ENCODE measurements at regions of chrX and their contacts with region 1.

Region 1: GRCh38 chrX:138745196-138745595 is 33.7 kb upstream of the FGF13 start:
- DNase-seq: no peak
- H3K4me3 ChIP-seq: no peak overlapping the region
- H3K27ac ChIP-seq: no peak overlapping the region
- H3K4me1 ChIP-seq: no peaks in the 10 kb centered on the region
- H3K27me3 ChIP-seq: no peaks in the 10 kb centered on the region
- CTCF ChIP-seq: peak; percentile 31 to 74 (median 57)
- EP300 ChIP-seq: no peak
- POLR2A ChIP-seq: no peak

Region 2: DNA sequence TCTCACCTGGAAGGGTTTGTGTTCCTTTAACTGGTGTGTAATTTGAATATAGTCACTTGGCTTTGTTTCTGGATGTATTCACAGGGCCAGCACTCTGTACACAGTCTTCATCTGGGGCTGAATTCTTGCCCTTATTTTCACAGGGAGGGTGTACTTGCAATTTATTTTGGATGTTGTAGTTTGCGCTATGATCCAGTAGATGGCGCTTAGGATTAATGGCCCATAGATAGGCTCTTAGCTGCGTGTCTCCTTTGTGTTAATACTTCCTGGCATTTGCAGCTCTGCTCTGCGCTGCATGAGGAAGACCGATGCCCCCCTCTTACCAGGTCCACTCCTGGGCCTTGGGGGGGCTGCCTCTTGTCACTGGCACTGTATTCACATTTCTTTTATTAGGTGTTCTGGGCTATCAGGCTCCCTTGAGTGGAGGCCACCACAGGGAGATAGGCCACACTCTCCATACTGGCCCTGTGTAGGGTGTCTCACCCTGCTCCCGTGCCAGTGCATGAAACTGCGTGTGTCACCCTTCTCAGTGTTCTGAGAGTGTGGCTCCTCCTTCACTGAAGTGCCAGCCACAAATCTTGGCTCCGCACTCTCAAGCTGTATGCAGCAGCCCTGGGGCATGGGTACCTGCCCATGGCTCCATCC is 617.0 kb before region 1 on chrX:
- in situ Hi-C with region 1: loop called in 1 of 4 experiments (anchors 25 kb)
- intact Hi-C with region 1: loop called (anchors 5 kb)
- DNase-seq: no peak
- H3K4me3 ChIP-seq: no peak overlapping the region
- H3K27ac ChIP-seq: no peak overlapping the region
- H3K4me1 ChIP-seq: no peaks in the 10 kb centered on the region
- H3K27me3 ChIP-seq: no peaks in the 10 kb centered on the region
- CTCF ChIP-seq: peak in 4 of 5 experiments; percentile 18 to 59 (median 46)
- EP300 ChIP-seq: no peak
- POLR2A ChIP-seq: no peak

Region 3: DNA sequence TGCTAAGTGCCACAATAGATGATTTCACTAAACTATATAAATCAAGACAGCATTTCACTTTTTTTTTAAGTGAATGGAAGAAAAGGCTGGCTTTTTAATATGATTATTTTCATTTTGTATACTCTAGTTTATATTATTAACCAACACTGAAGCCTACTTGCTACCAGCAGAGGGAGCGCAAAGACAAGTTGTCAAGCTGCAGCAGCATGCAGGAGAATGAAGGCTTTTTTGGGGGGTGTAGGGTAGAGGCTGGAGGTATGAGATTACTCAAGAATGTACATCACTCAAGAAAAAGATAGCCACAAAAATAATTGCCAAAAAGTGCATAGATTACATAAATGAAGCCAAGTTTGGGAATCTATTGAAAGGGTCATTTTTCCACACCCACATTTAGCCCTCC is 553.2 kb before region 1 on chrX:
- in situ Hi-C with region 1: loop called in 1 of 4 experiments (anchors 25 kb)
- intact Hi-C with region 1: no loop called
- DNase-seq: no peak
- H3K4me3 ChIP-seq: no peak overlapping the region
- H3K27ac ChIP-seq: no peak overlapping the region
- H3K4me1 ChIP-seq: no peaks in the 10 kb centered on the region
- H3K27me3 ChIP-seq: no peaks in the 10 kb centered on the region
- CTCF ChIP-seq: no peak
- EP300 ChIP-seq: no peak
- POLR2A ChIP-seq: no peak

Region 4: DNA sequence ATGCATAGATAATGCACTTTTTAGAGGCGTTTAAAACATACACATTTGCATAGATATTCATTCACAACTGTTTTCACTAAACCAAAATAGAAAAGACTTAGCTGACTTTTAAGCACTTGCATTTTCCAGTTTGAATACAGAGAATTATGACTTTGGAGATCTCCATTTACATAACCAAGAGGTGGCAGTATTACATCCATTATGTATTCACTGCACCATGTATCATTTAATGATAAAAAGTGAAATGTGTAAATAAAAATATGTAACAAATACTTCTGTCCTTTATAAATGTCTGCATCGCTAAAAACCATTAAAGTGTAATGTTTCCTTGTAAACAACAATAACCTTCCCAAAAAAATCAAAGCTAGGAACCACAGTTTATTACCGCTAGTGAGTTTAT is 446.9 kb before region 1 on chrX:
- in situ Hi-C with region 1: no loop called
- intact Hi-C with region 1: loop called (anchors 5 kb)
- DNase-seq: no peak
- H3K4me3 ChIP-seq: no peak overlapping the region
- H3K27ac ChIP-seq: no peak overlapping the region
- H3K4me1 ChIP-seq: no peaks in the 10 kb centered on the region
- H3K27me3 ChIP-seq: no peaks in the 10 kb centered on the region
- CTCF ChIP-seq: no peak
- EP300 ChIP-seq: no peak
- POLR2A ChIP-seq: no peak

Region 5: GRCh38 chrX:138845786-138846185 is 100.6 kb after region 1 on chrX:
- in situ Hi-C with region 1: no loop called
- intact Hi-C with region 1: no loop called
- DNase-seq: no peak
- H3K4me3 ChIP-seq: no peak overlapping the region
- H3K27ac ChIP-seq: no peak overlapping the region
- H3K4me1 ChIP-seq: no peaks in the 10 kb centered on the region
- H3K27me3 ChIP-seq: no peaks in the 10 kb centered on the region
- CTCF ChIP-seq: no peak
- EP300 ChIP-seq: no peak
- POLR2A ChIP-seq: no peak

Region 6: GRCh38 chrX:139179592-139179991 is 434.4 kb after region 1 on chrX:
- in situ Hi-C with region 1: no loop called
- intact Hi-C with region 1: no loop called
- DNase-seq: no peak
- H3K4me3 ChIP-seq: no peak overlapping the region
- H3K27ac ChIP-seq: no peak overlapping the region
- H3K4me1 ChIP-seq: no peaks in the 10 kb centered on the region
- H3K27me3 ChIP-seq: no peaks in the 10 kb centered on the region
- CTCF ChIP-seq: no peak
- EP300 ChIP-seq: no peak
- POLR2A ChIP-seq: no peak

Measured in transverse colon (tissue), 4 donors.